Activated naive CD4-positive, alpha-beta T cell treated with anti-CD3 and anti-CD28 coated beads for 36 hours (primary cell): ENCODE measurements at regions of chr12 and their contacts with region 1.

Region 1: GRCh38 chr12:103548622-103549601 is 38.2 kb upstream of the STAB2 start:
- DNase-seq: peak; percentile 86
- H3K4me3 Mint-ChIP-seq: no peak overlapping the region
- H3K27ac Mint-ChIP-seq: no peak overlapping the region
- H3K4me1 Mint-ChIP-seq: peaks cover 2% of the 10 kb centered on the region
- H3K27me3 Mint-ChIP-seq: peaks cover 23% of the 10 kb centered on the region

Region 2: GRCh38 chr12:102169922-102170621 is 1378.8 kb before region 1 on chr12:
- CTCF ChIA-PET with region 1: no interaction called
- intact Hi-C with region 1: loop called (anchors 1 kb)
- DNase-seq: peak; percentile 30
- H3K4me3 Mint-ChIP-seq: no peak overlapping the region
- H3K27ac Mint-ChIP-seq: no peak overlapping the region
- H3K4me1 Mint-ChIP-seq: peaks cover 11% of the 10 kb centered on the region
- H3K27me3 Mint-ChIP-seq: no peaks in the 10 kb centered on the region

Region 3: DNA sequence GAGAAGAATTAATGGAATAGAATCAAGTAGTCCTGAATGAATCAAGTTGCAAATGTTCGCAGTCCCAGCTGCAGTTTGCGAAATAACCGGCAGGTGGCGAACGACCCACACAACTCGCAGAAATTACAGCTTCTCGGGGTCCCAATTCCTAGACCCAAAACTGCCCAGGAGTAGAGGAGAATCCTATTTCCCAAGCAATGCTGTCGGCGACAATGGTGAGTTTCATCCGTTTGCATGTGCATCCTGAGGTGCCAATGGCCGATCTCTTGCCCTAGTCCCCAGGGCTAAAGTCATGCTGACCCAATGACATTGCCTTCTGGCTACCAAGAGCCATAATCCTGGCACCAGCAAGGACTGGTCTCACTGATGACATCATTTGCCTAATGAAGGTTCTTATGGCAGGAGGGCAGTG is 600.0 kb before region 1 on chr12:
- CTCF ChIA-PET with region 1: interaction called, 12 read pairs
- intact Hi-C with region 1: loop called (anchors 1 kb)
- DNase-seq: peak; percentile 65
- H3K4me3 Mint-ChIP-seq: no peak overlapping the region
- H3K27ac Mint-ChIP-seq: no peak overlapping the region
- H3K4me1 Mint-ChIP-seq: peaks cover 13% of the 10 kb centered on the region
- H3K27me3 Mint-ChIP-seq: peaks cover 66% of the 10 kb centered on the region

Region 4: GRCh38 chr12:103326190-103326589 is 222.7 kb before region 1 on chr12:
- CTCF ChIA-PET with region 1: interaction called, 7 read pairs
- intact Hi-C with region 1: loop called (anchors 2 kb)
- DNase-seq: no peak
- H3K4me3 Mint-ChIP-seq: no peak overlapping the region
- H3K27ac Mint-ChIP-seq: no peak overlapping the region
- H3K4me1 Mint-ChIP-seq: no peaks in the 10 kb centered on the region
- H3K27me3 Mint-ChIP-seq: no peaks in the 10 kb centered on the region

Region 5: DNA sequence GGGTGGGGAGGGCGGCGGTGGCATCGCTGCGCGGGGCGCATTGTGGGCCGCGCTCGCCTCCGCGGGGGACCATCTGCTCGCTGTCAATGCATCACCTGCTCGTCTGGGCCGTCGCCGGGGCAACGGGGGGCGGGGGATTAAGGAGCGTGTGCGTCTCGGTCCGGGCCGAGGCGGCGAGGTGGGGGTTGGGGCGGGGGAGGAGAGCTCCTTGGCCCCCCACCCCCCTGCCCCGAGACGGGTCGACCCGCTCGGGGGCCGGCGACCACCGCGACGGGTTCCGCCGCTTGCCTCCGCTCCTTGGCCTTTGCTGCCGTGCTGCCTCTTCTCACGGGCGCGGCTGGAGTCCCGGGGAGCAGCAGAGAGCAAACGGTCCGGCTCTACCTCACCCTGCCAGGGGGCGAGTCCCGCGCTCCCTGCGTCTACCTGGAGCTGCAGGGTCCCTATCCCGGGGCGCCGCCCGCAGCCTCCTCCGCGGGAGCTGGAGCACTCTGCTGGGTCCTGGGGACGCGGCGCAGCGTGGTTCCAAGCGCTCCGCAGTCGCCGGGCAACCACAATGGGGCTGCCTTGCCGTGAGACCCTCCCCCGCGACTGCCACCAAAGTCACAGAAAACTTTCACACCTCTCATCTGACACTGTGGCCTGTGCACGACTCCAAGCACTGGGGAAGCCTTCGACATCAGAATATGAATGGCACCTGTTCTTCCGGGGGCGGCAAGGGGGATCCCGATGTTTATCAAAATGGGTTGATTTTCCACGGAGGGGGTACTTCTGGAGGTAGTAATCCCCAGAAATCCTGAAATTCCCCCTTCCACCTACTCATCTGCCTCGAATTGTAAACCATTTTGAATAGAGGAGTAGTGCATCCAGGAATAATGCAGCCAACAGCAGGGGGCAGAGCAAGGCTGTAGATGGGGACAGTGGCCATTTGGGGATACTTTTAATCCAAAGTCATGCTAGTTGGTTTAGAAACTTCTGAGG is 53.1 kb before region 1 on chr12 and contains the start of gene C12orf42:
- CTCF ChIA-PET with region 1: interaction called, 40 read pairs
- intact Hi-C with region 1: loop called (anchors 1 kb)
- DNase-seq: peak; percentile 77
- H3K4me3 Mint-ChIP-seq: peak within 1 kb of the TSS; percentile 57
- H3K27ac Mint-ChIP-seq: no peak within 1 kb of the TSS
- H3K4me1 Mint-ChIP-seq: peaks cover 29% of the 10 kb centered on the region
- H3K27me3 Mint-ChIP-seq: peaks cover 34% of the 10 kb centered on the region
- total RNA-seq, gene C12orf42: not detected

Region 6: DNA sequence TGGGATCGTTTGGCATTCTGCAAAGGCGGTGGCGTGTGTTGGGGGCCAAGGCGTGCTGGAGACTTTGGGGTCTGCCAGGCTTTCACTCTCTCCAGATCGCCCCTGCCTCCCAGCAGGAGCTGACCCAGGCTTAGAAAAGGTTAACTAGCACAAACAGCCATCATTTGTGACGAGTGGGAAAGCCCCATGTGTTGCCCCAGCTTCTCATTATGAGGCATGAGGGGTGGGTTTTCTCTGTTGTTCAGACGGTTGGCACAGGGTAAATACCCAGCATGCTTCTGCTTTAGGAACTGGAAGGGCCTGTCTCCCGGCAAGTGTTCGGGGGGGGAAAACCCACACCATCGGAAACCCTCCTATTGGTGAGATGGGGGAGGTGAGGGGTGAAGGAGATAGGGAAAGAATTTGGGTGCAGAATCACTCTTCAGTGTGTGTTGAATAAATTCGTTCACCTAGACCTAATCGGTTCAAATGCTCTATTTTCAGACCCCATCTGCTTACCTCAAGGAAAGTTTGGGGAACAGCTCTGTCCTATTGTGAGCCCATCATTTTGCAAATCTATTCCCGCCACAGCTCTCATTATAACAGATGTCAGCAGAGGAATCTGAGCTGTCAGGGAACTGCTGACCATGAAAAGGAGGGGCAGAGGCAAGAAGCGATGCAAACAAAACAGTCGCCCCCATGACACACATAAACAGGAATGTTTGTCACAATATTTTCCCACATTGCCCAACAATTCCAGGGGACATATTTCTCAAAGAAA is 18.4 kb before region 1 on chr12:
- CTCF ChIA-PET with region 1: interaction called, 10 read pairs
- intact Hi-C with region 1: no loop called
- DNase-seq: peak; percentile 34
- H3K4me3 Mint-ChIP-seq: no peak overlapping the region
- H3K27ac Mint-ChIP-seq: no peak overlapping the region
- H3K4me1 Mint-ChIP-seq: peaks cover 7% of the 10 kb centered on the region
- H3K27me3 Mint-ChIP-seq: peaks cover 3% of the 10 kb centered on the region

Region 7: GRCh38 chr12:103632554-103633216 is 83.8 kb after region 1 on chr12:
- CTCF ChIA-PET with region 1: no interaction called
- intact Hi-C with region 1: loop called (anchors 1 kb)
- DNase-seq: peak; percentile 79
- H3K4me3 Mint-ChIP-seq: no peak overlapping the region
- H3K27ac Mint-ChIP-seq: no peak overlapping the region
- H3K4me1 Mint-ChIP-seq: no peaks in the 10 kb centered on the region
- H3K27me3 Mint-ChIP-seq: peaks cover 2% of the 10 kb centered on the region